ENCODE measurements at regions of chrX and their contacts with region 1.

Region 1: DNA sequence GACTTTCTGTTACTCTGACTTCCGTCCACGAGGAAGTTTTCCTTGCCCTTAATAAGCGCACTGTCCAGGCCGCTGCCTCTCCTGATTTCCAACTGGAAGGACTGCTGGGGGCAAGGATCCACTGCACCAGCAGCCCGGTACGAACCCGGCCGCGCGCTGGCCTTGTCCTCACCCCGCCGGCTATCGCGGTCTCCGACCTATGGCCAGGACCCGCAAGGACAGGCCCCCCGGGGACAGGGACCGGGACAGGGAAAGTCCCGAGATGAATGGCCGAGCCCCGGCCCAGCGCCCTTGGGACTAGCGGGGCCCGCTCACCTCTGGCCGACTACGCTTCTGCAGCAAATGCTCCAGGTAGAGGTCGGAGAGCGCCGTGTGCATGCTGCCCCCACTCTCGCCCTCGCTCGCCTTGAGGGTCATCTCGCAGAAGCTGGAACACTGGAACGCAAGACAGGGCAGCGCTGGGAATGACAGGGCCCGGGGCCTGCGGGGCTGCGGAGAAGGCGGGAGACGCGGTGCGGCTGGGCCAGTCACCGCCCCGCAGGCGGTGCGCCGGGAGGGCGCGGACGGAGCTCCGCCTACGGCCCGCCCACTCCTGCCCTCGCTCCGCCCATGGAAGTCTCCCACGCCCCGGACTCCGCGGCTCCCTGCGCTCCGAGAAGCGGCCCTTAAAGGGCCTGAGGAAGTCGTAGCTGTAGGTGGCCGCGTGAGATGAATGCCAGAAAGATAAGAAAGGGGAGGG is at the start of gene MPP1:
- DNase-seq: peak; percentile 75 to 86
- ATAC-seq: peak; percentile 96 to 99 (median 98)
- H3K4me3 ChIP-seq: peak within 1 kb of the TSS; percentile 78
- H3K27ac ChIP-seq: peak within 1 kb of the TSS; percentile 72
- H3K4me1 ChIP-seq: peaks cover 8% of the 10 kb centered on the region
- H3K27me3 ChIP-seq: no peaks in the 10 kb centered on the region
- CTCF ChIP-seq: no peak
- total RNA-seq, gene MPP1: 15.1 to 21.3 (median 18.8) TPM

Region 2: DNA sequence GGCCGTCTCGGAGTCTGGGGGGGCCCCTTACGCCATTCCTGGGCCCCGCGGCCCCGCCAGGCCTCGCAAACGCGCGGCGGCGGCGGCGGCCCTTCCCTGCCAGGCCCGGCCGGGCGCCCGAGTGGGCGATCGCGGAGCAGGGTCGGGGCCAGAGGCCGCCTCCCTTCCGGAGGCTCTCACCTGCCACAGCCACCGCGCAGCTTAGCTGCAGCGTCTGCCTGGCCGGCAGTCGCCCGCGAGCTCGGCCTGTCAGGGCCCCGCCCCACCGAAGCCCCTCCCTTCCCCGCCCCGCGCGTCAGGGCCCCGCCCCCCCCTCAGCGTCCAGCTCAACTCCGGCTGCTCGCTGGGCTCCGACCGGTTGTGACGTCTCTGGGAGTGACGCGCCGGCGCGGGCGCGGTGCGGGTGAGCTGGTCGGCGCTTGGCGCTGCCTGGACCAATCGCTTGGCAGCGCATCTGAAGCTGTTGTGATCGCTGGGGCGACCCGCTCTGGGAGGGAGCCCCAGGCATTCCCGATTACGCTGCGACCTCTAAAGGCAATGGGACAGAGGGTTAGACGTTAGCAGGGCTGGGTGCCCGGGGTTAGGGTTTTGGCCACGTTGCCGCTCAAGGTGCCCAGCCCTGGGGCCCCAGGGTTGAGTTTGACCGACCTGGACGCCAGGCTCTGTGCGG is 314.6 kb before region 1 on chrX and contains the start of gene SLC10A3:
- intact Hi-C with region 1: no loop called
- DNase-seq: peak; percentile 93 to 96
- ATAC-seq: peak; percentile 90 to 93 (median 92)
- H3K4me3 ChIP-seq: peak within 1 kb of the TSS; percentile 67
- H3K27ac ChIP-seq: peak within 1 kb of the TSS; percentile 93
- H3K4me1 ChIP-seq: no peaks in the 10 kb centered on the region
- H3K27me3 ChIP-seq: no peaks in the 10 kb centered on the region
- CTCF ChIP-seq: no peak
- total RNA-seq, gene SLC10A3: 7.2 to 15.7 (median 13.8) TPM

Region 3: GRCh38 chrX:154762523-154763289 is 42.4 kb before region 1 on chrX and contains the start of gene DKC1:
- intact Hi-C with region 1: loop called in 1 of 2 experiments (anchors 5 kb)
- DNase-seq: peak; percentile 96 to 98
- ATAC-seq: peak; percentile 95 to 97 (median 96)
- H3K4me3 ChIP-seq: peak within 1 kb of the TSS; percentile 82
- H3K27ac ChIP-seq: peak within 1 kb of the TSS; percentile 86
- H3K4me1 ChIP-seq: no peaks in the 10 kb centered on the region
- H3K27me3 ChIP-seq: no peaks in the 10 kb centered on the region
- CTCF ChIP-seq: no peak
- total RNA-seq, gene DKC1: 21.2 to 45.5 (median 34.6) TPM

Region 4: DNA sequence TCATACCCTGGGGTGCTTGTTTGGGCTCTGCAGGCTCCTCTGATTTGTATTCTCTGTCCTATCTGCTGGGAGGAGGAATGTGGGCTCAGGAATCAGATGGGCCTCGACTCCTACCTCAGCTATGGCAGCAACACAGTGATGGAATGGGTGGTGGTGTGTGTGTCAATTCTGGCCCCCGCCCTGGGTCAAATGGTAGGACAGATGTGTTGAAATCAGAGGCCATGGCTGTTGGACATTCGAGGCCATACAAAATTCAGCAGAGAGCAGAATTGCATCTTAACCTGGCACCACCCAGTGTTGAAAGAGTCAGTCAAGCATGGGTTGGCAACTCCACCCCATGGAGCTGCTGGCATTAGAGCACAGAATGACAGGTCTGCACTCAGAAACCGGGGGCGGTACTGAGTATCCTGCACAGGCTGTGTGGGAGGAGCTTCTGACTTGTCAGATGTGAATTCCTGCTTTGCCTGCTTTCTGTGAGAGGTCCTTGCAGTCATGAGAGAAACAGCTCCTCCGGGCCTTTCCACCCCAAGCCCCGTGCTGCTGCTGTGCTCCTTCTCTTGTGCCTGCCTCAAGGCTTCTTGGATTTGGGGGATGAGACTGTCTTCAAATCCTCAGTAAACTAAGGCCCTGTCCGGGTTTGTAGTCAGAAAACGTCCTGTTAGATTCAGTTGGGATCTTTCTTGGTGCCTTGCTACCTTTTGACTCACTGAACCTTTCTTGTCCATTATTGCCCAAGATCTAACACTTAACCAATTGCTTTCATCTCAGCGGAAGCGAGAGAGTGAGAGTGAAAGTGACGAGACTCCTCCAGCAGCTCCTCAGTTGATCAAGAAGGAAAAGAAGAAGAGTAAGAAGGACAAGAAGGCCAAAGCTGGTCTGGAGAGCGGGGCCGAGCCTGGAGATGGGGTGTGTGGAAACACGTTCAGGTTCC is 29.4 kb before region 1 on chrX:
- intact Hi-C with region 1: no loop called
- DNase-seq: no peak
- ATAC-seq: no peak
- H3K4me3 ChIP-seq: no peak overlapping the region
- H3K27ac ChIP-seq: no peak overlapping the region
- H3K4me1 ChIP-seq: no peaks in the 10 kb centered on the region
- H3K27me3 ChIP-seq: no peaks in the 10 kb centered on the region
- CTCF ChIP-seq: no peak

Region 5: GRCh38 chrX:154791939-154792338 is 13.2 kb before region 1 on chrX:
- intact Hi-C with region 1: loop called in 1 of 2 experiments (anchors 2 kb)
- DNase-seq: no peak
- ATAC-seq: no peak
- H3K4me3 ChIP-seq: no peak overlapping the region
- H3K27ac ChIP-seq: no peak overlapping the region
- H3K4me1 ChIP-seq: no peaks in the 10 kb centered on the region
- H3K27me3 ChIP-seq: no peaks in the 10 kb centered on the region
- CTCF ChIP-seq: no peak